Sigmoid colon (tissue), 7 donors: ENCODE measurements at regions of chr15 and their contacts with region 1.

Region 1: DNA sequence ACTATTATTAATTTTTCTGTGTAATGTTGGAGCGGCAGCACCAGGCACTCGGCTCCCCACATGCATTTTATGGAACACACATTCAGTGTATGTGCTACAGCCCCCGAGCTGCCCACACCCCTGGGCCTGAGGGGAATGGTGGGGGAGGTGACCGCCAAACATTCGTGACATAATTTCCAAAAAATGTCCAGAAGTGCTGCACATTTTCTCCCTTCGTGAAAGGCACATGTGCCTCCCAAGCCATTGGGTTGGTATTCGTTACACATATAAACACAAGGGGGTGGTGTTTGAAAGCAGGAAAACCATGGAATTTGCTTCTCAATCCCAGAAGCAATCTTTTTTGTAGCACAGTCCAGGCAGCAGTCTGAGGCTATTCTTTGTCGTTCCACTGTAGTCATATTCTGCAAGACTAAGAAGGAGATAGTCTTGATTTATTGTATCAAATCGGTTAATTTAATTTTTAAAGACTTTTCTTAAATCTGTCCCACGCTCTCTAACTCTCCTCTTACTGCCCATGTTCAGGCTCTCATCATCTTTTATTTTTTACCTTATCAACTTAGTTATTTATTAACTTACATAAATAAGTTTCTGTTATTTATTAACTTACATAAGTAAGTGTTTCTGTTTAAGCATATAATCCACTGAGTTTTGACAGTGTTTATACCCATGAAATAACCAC is 39.2 kb upstream of the POLR2M start:
- DNase-seq: no peak
- H3K4me3 ChIP-seq: no peak overlapping the region
- H3K27ac ChIP-seq: peak overlapping the region in 2 of 4 donors; percentile 38 to 61
- H3K4me1 ChIP-seq: peaks cover 0 to 15% (median 9%) of the 10 kb centered on the region in 4 donors
- H3K27me3 ChIP-seq: no peaks in the 10 kb centered on the region
- CTCF ChIP-seq: peak in 2 of 4 experiments; percentile 15 to 48
- EP300 ChIP-seq: no peak
- POLR2A ChIP-seq: no peak

Region 2: GRCh38 chr15:57706405-57707209 is 39.3 kb after region 1 on chr15 and contains the start of gene POLR2M:
- intact Hi-C with region 1: no loop called
- DNase-seq: peak; percentile 99
- H3K4me3 ChIP-seq: peak within 1 kb of the TSS; percentile 82 to 96 (median 86)
- H3K27ac ChIP-seq: peak within 1 kb of the TSS; percentile 94 to 97 (median 96)
- H3K4me1 ChIP-seq: peaks cover 0 to 35% (median 28%) of the 10 kb centered on the region in 4 donors
- H3K27me3 ChIP-seq: no peaks in the 10 kb centered on the region
- CTCF ChIP-seq: no peak
- EP300 ChIP-seq: peak; percentile 61 to 92 (median 71)
- POLR2A ChIP-seq: peak; percentile 61 to 68
- total RNA-seq, gene POLR2M: 80.6 to 264 (median 194) TPM

Region 3: GRCh38 chr15:57732526-57733331 is 65.4 kb after region 1 on chr15:
- intact Hi-C with region 1: loop called (anchors 10 kb)
- DNase-seq: no peak
- H3K4me3 ChIP-seq: no peak overlapping the region
- H3K27ac ChIP-seq: no peak overlapping the region
- H3K4me1 ChIP-seq: peaks cover 0 to 27% (median 4%) of the 10 kb centered on the region in 4 donors
- H3K27me3 ChIP-seq: no peaks in the 10 kb centered on the region
- CTCF ChIP-seq: peak in 3 of 4 experiments; percentile 42 to 81 (median 64)
- EP300 ChIP-seq: no peak
- POLR2A ChIP-seq: no peak